Heart left ventricle (tissue), 16 donors: ENCODE measurements at regions of chr1 and their contacts with region 1.

Region 1: GRCh38 chr1:145963995-145964901 is at the starts of genes ANKRD34A and POLR3GL:
- DNase-seq: peak; percentile 96 to 97 (median 97)
- ATAC-seq: peak; percentile 80 to 89 (median 88)
- H3K4me3 ChIP-seq: peak within 1 kb of the TSS; percentile 39 to 81 (median 73)
- H3K27ac ChIP-seq: peak within 1 kb of the TSS; percentile 71 to 98 (median 89)
- H3K4me1 ChIP-seq: peaks cover 0 to 57% (median 33%) of the 10 kb centered on the region in 12 donors
- H3K27me3 ChIP-seq: no peaks in the 10 kb centered on the region
- CTCF ChIP-seq: no peak
- POLR2A ChIP-seq: peak; percentile 86 to 98
- total RNA-seq, gene ANKRD34A: 1.0 to 3.5 (median 1.7) TPM
- total RNA-seq, gene POLR3GL: 30.2 to 45.7 (median 36.0) TPM

Region 2: GRCh38 chr1:145858894-145859490 is 105.3 kb before region 1 on chr1 and contains the start of gene PIAS3:
- intact Hi-C with region 1: loop called in 5 of 10 experiments (anchors 2 to 10 kb)
- DNase-seq: peak; percentile 96 to 98 (median 98)
- ATAC-seq: peak; percentile 96 to 97 (median 96)
- H3K4me3 ChIP-seq: peak within 1 kb of the TSS; percentile 55 to 97 (median 90)
- H3K27ac ChIP-seq: peak within 1 kb of the TSS; percentile 89 to 95 (median 92)
- H3K4me1 ChIP-seq: peaks cover 0 to 22% (median 13%) of the 10 kb centered on the region in 12 donors
- H3K27me3 ChIP-seq: no peaks in the 10 kb centered on the region
- CTCF ChIP-seq: no peak
- POLR2A ChIP-seq: peak in 1 of 2 donors; percentile 91
- total RNA-seq, gene PIAS3: 14.2 to 25.8 (median 15.6) TPM

Region 3: GRCh38 chr1:145918144-145918992 is 45.9 kb before region 1 on chr1 and contains the start of gene PEX11B:
- intact Hi-C with region 1: loop called in 6 of 10 experiments (anchors 2 to 5 kb)
- DNase-seq: peak; percentile 89 to 93 (median 92)
- ATAC-seq: peak; percentile 91 to 96 (median 95)
- H3K4me3 ChIP-seq: peak within 1 kb of the TSS; percentile 72 to 99 (median 89)
- H3K27ac ChIP-seq: peak within 1 kb of the TSS; percentile 64 to 97 (median 92)
- H3K4me1 ChIP-seq: peaks cover 5 to 29% (median 22%) of the 10 kb centered on the region in 12 donors
- H3K27me3 ChIP-seq: no peaks in the 10 kb centered on the region
- CTCF ChIP-seq: no peak
- POLR2A ChIP-seq: peak in 1 of 2 donors; percentile 34
- total RNA-seq, gene PEX11B: 17.7 to 27.5 (median 24.5) TPM

Region 4: DNA sequence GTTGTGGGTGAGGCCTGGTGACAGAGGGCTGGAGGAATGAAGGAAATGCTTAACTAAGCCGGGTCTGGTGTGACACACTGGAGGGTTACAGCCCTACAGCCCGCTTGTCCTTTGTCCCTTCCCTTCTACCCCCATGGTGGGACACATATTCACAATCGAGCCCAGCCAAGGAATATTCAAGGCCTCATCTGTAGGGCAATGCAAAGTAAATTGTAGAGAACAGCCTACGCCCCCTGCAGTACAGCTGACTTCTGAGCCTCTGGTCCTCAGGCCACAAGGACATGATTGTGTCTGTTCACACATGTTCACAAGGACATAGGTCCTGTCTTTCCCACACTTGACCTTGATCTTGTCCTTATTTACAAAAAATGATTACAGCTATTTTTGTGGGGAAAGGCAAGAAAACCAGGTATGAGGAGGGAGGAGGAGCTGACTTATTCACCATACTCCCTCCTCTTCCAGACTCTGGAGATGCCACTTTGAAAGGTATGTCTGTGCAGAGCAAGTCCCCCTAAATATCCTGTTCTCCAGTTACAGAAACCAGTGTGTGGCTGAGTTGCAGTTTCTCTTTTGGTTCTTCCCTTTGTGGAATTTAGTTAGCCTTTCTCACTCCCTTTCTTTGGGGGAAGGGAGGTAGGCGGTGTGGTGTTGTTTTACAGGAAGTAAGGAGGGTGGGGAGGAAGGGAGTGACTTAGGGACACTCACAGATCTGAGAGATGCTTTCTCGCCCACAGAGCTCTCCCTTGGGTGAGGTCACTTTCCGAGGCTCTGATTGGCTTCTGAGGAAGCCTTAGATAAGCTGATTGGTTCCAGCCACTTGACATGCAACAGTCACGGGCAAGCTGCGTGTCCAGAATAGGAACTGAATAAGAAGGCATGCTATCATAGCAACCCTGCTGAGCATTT is 14.9 kb after region 1 on chr1:
- intact Hi-C with region 1: loop called in 1 of 10 experiments (anchors 2 kb)
- DNase-seq: peak; percentile 89 to 97 (median 96)
- ATAC-seq: peak; percentile 85 to 95 (median 89)
- H3K4me3 ChIP-seq: peak overlapping the region in 11 of 12 donors; percentile 1 to 46 (median 36)
- H3K27ac ChIP-seq: peak overlapping the region; percentile 81 to 98 (median 96)
- H3K4me1 ChIP-seq: peaks cover 23 to 70% (median 63%) of the 10 kb centered on the region in 12 donors
- H3K27me3 ChIP-seq: no peaks in the 10 kb centered on the region
- CTCF ChIP-seq: peak in 8 of 12 donors; percentile 10 to 54 (median 36)
- POLR2A ChIP-seq: peak in 1 of 2 donors; percentile 79

Region 5: GRCh38 chr1:146007506-146008133 is 43.4 kb after region 1 on chr1:
- intact Hi-C with region 1: loop called in 1 of 10 experiments (anchors 5 kb)
- DNase-seq: no peak
- ATAC-seq: peak in 1 of 4 donors; percentile 10
- H3K4me3 ChIP-seq: peak overlapping the region in 5 of 12 donors; percentile 8 to 27 (median 22)
- H3K27ac ChIP-seq: peak overlapping the region; percentile 31 to 94 (median 84)
- H3K4me1 ChIP-seq: peaks cover 2 to 62% (median 15%) of the 10 kb centered on the region in 12 donors
- H3K27me3 ChIP-seq: no peaks in the 10 kb centered on the region
- CTCF ChIP-seq: peak in 1 of 12 donors; percentile 19
- POLR2A ChIP-seq: no peak